Activated naive CD4-positive, alpha-beta T cell treated with anti-CD3 and anti-CD28 coated beads for 36 hours (primary cell): ENCODE measurements at regions of chr5 and their contacts with region 1.

Region 1: DNA sequence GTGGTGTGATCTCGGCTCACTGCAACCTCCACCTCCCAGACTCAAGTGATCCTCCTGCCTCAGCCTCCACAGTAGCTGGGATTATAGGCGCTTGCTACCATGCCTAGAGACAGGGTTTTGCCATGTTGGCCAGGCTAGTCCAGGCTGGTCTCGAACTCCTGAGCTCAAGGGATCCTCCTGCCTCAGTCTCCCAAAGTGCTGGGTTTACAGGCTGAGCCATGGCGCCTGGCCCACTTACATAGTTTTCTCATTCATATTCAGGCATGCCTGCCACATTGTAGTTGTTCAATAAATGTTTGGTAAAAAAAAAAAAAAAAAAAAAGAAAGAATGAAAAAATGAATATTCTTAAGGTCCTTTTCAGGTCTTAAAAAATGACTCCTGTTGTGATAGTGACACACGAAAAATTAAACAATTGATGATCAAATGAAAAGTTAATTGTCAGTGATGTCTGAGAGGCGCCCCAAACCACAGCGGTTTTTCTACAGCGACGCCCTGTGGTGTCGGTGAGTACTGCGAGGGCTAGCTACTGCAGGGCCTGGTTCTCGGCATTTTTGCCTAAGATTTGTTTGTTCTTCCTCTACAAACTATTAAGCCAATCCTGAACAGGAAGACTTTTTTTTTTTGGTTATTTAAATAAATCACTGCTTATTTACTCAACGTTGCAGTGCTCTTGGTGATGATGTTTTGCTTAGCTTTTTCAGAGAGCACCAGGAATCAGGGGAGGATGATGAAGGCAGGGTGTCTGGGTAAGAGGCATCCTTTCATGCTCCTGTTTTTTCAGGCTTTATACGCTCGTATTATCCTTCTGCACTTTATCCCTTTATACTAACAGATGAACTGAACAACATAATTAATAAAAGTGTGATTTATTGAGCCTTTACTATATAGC is 67.0 kb upstream of the DPYSL3 start:
- DNase-seq: peak; percentile 56
- H3K4me3 Mint-ChIP-seq: no peak overlapping the region
- H3K27ac Mint-ChIP-seq: no peak overlapping the region
- H3K4me1 Mint-ChIP-seq: no peaks in the 10 kb centered on the region
- H3K27me3 Mint-ChIP-seq: no peaks in the 10 kb centered on the region

Region 2: GRCh38 chr5:146565764-146566367 is 1011.0 kb before region 1 on chr5:
- CTCF ChIA-PET with region 1: no interaction called
- intact Hi-C with region 1: loop called (anchors 5 kb)
- DNase-seq: peak; percentile 73
- H3K4me3 Mint-ChIP-seq: no peak overlapping the region
- H3K27ac Mint-ChIP-seq: no peak overlapping the region
- H3K4me1 Mint-ChIP-seq: peaks cover 4% of the 10 kb centered on the region
- H3K27me3 Mint-ChIP-seq: no peaks in the 10 kb centered on the region

Region 3: GRCh38 chr5:147223948-147224791 is 352.7 kb before region 1 on chr5:
- CTCF ChIA-PET with region 1: no interaction called
- intact Hi-C with region 1: loop called (anchors 1 kb)
- DNase-seq: peak; percentile 15
- H3K4me3 Mint-ChIP-seq: no peak overlapping the region
- H3K27ac Mint-ChIP-seq: no peak overlapping the region
- H3K4me1 Mint-ChIP-seq: peaks cover 3% of the 10 kb centered on the region
- H3K27me3 Mint-ChIP-seq: no peaks in the 10 kb centered on the region

Region 4: DNA sequence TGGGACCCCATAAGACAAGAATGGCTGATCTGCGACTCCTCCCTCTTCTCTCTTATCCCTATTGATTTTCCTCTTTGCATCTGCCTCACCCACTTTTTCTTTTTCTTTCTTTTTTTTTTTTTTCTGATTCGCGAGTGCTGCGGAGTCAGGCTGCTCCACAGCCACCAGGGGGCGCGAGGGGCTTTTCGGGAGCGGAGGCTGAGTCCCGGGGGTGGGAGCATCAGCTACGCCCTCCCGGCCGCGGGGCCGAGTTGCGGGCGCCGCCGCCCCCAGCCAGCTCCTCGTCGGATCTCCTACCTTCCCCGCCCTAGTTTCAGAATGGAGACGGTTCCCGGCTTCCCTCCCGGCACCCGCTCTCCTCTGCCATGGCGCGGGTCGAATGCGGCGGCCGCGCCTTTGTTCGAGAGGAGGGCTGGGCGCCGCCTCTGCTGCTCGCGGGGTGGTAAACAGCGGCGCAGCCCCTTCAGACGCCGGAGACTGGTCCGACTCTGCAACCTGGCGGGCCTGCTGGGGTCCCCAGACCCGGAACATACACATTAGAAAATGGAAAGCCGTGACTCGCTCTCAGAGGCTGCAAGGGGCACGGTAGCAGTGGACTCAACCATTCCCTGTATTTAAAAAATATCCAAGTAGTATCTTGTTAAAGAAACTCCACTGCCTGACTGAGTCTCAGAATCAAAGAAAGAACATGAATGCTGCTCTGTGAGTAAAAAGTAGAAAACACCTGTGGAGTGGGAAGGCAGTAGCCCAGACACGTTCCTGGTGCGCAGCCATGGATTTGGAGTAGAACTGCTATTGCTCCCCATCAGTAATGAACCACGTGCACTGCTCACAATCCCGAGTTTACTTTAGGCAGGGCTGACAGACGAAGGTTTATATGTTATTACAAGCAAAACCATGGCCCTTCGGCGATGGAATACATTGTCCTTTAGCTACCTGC is 122.7 kb before region 1 on chr5:
- CTCF ChIA-PET with region 1: interaction called, 4 read pairs
- intact Hi-C with region 1: loop called (anchors 1 kb)
- DNase-seq: peak; percentile 74
- H3K4me3 Mint-ChIP-seq: peak overlapping the region; percentile 76
- H3K27ac Mint-ChIP-seq: no peak overlapping the region
- H3K4me1 Mint-ChIP-seq: peaks cover 8% of the 10 kb centered on the region
- H3K27me3 Mint-ChIP-seq: peaks cover 68% of the 10 kb centered on the region